H1 (cell line): ENCODE measurements at regions of chr4 and their contacts with region 1.

Region 1: GRCh38 chr4:48033825-48034413 is 17.3 kb downstream of the NIPAL1 start:
- DNase-seq: peak in 1 of 2 experiments; percentile 63
- H3K4me3 ChIP-seq: no peak overlapping the region
- H3K27ac ChIP-seq: no peak overlapping the region
- H3K4me1 ChIP-seq: peaks cover 0 to 11% (median 0%) of the 10 kb centered on the region in 4 experiments; a peak in 4 of 7 replicates
- H3K27me3 ChIP-seq: no peaks in the 10 kb centered on the region
- CTCF ChIP-seq: peak in 2 of 3 experiments; percentile 51 to 75; a peak in 2 of 4 replicates
- EP300 ChIP-seq: no peak
- POLR2A ChIP-seq: no peak
- RAD21 ChIP-seq: peak; percentile 44 to 58

Region 2: DNA sequence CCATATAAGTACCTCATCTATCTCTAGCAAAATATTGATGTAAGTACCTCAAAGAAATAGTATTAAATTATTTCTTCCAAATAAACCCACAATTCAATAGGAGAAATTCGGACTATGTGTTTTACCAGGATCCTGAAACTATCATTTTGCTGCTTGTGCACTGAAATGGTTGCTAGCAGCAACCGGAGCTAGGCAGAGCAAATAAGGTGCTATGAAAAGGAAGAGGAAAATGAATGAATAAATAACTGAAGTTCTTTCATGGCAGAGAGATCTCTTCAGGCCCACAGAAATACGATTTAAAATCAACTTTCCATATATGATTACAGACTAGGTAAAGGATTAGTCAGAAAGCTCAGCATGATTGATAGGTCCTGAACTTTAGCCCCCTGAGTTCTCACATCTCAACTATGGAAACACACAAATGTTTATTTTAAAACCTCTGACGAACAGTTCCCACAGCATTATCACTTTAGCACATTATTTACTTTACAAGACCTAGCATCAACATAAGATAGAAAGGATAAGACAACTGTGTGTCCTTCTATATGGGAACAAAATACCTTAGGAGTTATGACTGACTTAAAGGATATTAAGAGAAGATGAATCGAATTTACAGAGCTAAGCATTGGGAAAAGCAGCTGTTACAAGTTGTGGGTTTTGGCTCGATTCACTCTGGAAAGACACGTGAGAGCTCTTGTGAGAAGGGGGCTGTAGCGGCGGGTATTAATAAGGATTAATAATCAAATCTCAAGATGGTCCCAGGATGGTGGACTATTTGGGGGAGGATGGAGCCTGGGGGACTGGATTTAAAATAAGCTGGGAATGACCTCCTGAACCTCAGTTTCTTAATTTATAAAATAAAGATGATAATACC is 300.4 kb before region 1 on chr4:
- CTCF ChIA-PET with region 1: no interaction called
- POLR2A ChIA-PET with region 1: no interaction called
- DNase-seq: no peak
- H3K4me3 ChIP-seq: no peak overlapping the region
- H3K27ac ChIP-seq: no peak overlapping the region
- H3K4me1 ChIP-seq: no peaks in the 10 kb centered on the region
- H3K27me3 ChIP-seq: no peaks in the 10 kb centered on the region
- CTCF ChIP-seq: no peak
- EP300 ChIP-seq: no peak
- POLR2A ChIP-seq: no peak
- RAD21 ChIP-seq: no peak

Region 3: DNA sequence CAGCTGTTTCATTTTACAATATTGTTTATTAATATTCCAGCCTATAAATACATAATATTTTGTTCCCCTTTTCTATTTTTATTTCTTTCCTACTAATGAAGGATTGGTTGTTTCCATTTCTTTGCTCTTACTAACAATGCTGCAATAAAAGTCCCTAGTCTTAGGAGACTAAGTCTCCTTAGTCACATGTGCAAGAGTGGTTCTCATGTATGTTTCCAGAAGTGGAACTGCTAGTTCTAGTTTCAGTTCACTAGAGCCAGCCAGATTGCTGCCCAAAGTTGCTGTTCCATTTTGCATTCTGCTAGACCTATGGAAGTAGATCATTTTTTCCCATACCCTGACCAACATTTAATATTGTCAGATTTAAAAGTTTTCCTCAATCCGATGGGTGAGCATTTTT is 61.7 kb before region 1 on chr4:
- CTCF ChIA-PET with region 1: no interaction called
- POLR2A ChIA-PET with region 1: no interaction called
- DNase-seq: no peak
- H3K4me3 ChIP-seq: no peak overlapping the region
- H3K27ac ChIP-seq: no peak overlapping the region
- H3K4me1 ChIP-seq: no peaks in the 10 kb centered on the region
- H3K27me3 ChIP-seq: no peaks in the 10 kb centered on the region
- CTCF ChIP-seq: no peak
- EP300 ChIP-seq: no peak
- POLR2A ChIP-seq: no peak
- RAD21 ChIP-seq: no peak

Region 4: DNA sequence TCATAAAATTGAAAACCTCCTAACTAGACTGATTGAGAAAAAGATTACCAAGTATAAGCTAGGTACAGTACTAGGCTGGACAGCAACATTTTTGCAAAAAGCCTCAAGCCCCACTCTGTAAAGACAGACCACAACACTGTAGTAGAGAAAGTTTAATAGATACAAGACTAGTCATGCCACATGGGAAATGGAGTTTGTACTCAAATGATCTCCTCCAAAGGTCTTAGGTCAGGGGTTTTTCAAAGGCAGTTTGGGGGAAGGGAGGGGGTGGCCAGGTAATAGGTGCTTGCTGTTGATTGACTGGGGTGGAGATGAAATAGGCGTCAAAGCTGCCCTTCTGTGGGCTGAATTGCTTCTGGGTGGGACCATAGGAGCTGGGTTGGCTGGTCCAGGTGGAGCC is 31.7 kb before region 1 on chr4:
- CTCF ChIA-PET with region 1: interaction called, 14 read pairs
- POLR2A ChIA-PET with region 1: no interaction called
- DNase-seq: no peak
- H3K4me3 ChIP-seq: no peak overlapping the region
- H3K27ac ChIP-seq: no peak overlapping the region
- H3K4me1 ChIP-seq: no peaks in the 10 kb centered on the region
- H3K27me3 ChIP-seq: no peaks in the 10 kb centered on the region
- CTCF ChIP-seq: no peak
- EP300 ChIP-seq: no peak
- POLR2A ChIP-seq: no peak
- RAD21 ChIP-seq: no peak

Region 5: DNA sequence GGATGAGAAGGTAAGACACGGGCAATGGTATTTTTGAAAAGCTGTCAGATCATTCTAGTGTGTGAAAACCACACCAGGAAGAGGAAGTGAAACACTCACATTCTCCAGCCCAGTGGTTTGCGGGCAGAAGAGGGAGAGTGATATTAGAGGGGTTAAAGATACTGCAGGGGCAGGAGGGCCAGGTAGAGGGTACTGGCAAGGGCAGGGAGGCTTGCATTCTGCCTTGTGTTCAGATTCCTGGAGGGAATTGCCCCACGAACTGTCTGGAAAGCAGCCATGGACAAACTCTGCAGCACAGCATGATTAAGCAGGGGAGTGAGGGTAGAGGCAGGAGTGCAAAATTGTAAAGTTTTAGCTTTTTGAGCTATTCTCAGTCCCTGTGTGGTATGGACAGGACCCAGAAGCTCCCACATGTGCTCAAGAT is 13.5 kb after region 1 on chr4:
- CTCF ChIA-PET with region 1: interaction called, 85 read pairs
- POLR2A ChIA-PET with region 1: interaction called, 4 read pairs
- DNase-seq: no peak
- H3K4me3 ChIP-seq: no peak overlapping the region
- H3K27ac ChIP-seq: no peak overlapping the region
- H3K4me1 ChIP-seq: no peaks in the 10 kb centered on the region; a peak in 1 of 7 replicates
- H3K27me3 ChIP-seq: no peaks in the 10 kb centered on the region
- CTCF ChIP-seq: no peak
- EP300 ChIP-seq: no peak
- POLR2A ChIP-seq: no peak
- RAD21 ChIP-seq: no peak

Region 6: DNA sequence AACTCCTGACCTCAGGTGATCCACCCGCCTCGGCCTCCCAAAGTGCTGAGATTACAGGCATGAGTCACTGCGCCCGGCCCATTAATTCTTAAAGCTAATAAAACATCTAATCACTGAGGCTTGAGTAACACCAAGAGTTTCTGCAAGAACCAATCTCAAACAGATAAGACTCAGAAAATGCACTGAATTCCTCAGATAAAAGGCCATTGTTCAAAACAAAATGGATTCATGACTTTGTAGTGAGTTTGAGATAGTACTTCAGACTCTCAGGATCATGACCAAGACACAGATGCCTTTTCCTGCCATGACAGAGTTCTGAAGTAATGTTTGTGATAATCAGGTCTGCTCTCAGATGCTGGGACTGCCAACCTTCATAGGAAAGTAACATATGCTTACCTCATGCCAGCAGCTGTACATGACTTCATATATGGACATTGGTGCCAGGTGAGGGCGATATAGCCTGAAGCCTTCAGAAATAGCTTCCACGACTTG is 37.2 kb after region 1 on chr4:
- CTCF ChIA-PET with region 1: interaction called, 14 read pairs
- POLR2A ChIA-PET with region 1: no interaction called
- DNase-seq: no peak
- H3K4me3 ChIP-seq: no peak overlapping the region
- H3K27ac ChIP-seq: no peak overlapping the region
- H3K4me1 ChIP-seq: no peaks in the 10 kb centered on the region
- H3K27me3 ChIP-seq: no peaks in the 10 kb centered on the region
- CTCF ChIP-seq: no peak
- EP300 ChIP-seq: no peak
- POLR2A ChIP-seq: no peak
- RAD21 ChIP-seq: no peak

Region 7: GRCh38 chr4:48109413-48110263 is 75.7 kb after region 1 on chr4:
- CTCF ChIA-PET with region 1: interaction called, 13 read pairs
- POLR2A ChIA-PET with region 1: no interaction called
- DNase-seq: no peak
- H3K4me3 ChIP-seq: no peak overlapping the region
- H3K27ac ChIP-seq: no peak overlapping the region
- H3K4me1 ChIP-seq: peaks cover 0 to 3% (median 0%) of the 10 kb centered on the region in 4 experiments; a peak in 2 of 7 replicates
- H3K27me3 ChIP-seq: no peaks in the 10 kb centered on the region
- CTCF ChIP-seq: peak in 2 of 3 experiments; percentile 55 to 68; a peak in 3 of 4 replicates
- EP300 ChIP-seq: no peak
- POLR2A ChIP-seq: no peak
- RAD21 ChIP-seq: peak; percentile 58 to 67

Region 8: GRCh38 chr4:48180234-48180633 is 146.3 kb after region 1 on chr4:
- CTCF ChIA-PET with region 1: no interaction called
- POLR2A ChIA-PET with region 1: no interaction called
- DNase-seq: no peak
- H3K4me3 ChIP-seq: no peak overlapping the region
- H3K27ac ChIP-seq: no peak overlapping the region
- H3K4me1 ChIP-seq: peaks cover 1 to 4% (median 2%) of the 10 kb centered on the region in 4 experiments; a peak in 5 of 7 replicates
- H3K27me3 ChIP-seq: no peaks in the 10 kb centered on the region
- CTCF ChIP-seq: no peak
- EP300 ChIP-seq: no peak
- POLR2A ChIP-seq: no peak
- RAD21 ChIP-seq: no peak

Region 9: DNA sequence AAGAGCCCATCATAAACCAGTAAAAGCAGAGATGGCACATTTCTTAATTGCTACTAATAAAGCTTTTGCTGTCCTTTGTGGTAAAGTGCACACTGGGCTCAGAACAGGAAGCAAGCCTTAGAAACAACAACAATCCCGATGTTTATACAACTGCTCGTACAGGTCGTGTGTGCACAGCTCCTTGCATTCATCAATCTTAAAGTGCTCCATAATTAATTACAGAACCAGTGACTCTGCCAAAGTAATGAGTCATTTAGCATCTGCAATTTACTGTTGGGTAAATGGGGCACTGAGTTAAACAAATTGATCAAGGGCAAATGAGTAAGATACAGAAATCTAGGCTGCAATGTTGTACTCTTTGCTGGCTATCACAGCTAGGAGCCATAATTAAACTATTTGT is 161.5 kb after region 1 on chr4:
- CTCF ChIA-PET with region 1: no interaction called
- POLR2A ChIA-PET with region 1: no interaction called
- DNase-seq: no peak
- H3K4me3 ChIP-seq: no peak overlapping the region
- H3K27ac ChIP-seq: no peak overlapping the region
- H3K4me1 ChIP-seq: no peaks in the 10 kb centered on the region
- H3K27me3 ChIP-seq: no peaks in the 10 kb centered on the region
- CTCF ChIP-seq: no peak
- EP300 ChIP-seq: no peak
- POLR2A ChIP-seq: no peak
- RAD21 ChIP-seq: no peak